ENCODE measurements at regions of chr12 and their contacts with region 1.

Region 1: GRCh38 chr12:113378291-113378690 is 19.9 kb downstream of the PLBD2 start:
- DNase-seq: no peak
- CTCF ChIP-seq: no peak

Region 2: DNA sequence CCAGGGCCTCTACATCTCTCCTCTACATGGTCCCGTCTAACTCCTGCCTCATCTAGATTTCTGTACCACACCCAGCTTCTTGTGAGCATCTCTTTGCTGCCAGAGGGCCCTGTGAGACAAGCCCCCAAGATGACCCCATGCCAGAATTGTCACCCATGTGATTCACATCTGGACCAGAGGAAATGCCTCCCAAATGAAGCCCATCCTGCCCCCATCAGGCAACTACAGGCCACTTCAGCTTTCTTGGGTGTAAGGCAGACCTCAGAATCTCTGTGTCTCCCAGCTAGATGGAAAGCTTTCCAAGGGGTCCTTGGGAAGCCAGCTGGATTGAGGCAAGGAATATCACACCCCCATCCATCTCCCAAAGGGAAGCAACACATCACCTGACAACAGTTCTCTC is 449.3 kb before region 1 on chr12:
- CTCF ChIA-PET with region 1: no interaction called
- POLR2A ChIA-PET with region 1: no interaction called
- DNase-seq: no peak
- CTCF ChIP-seq: peak; percentile 14

Region 3: DNA sequence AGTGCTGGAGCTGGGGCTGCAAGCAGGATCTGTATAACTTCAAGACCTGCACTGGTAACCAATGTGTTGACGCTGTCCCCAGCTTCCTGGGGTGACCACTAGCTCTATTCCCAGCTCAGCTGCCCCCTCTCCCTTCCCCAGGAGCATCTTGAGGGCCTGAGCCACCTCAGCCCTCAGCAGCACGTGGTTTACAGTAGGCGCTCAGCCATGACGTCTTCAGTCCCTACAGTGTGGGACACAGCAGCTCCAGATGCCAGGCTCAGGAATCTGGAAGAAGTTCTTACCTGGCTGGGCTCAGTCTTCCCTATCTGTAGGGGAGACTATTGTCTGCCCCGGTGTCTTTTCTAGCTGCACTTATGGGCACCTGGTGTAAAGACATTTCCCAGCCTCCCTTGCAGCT is 16.8 kb after region 1 on chr12:
- CTCF ChIA-PET with region 1: no interaction called
- POLR2A ChIA-PET with region 1: interaction called, 10 read pairs
- DNase-seq: no peak
- CTCF ChIP-seq: no peak

Measured in GM10248 (cell line).